ENCODE measurements at regions of chr3 and their contacts with region 1.

Region 1: GRCh38 chr3:193788189-193788991 is 195.4 kb downstream of the OPA1 start:
- DNase-seq: peak; percentile 48 to 77 (median 70)
- H3K4me3 ChIP-seq: no peak overlapping the region
- H3K27ac ChIP-seq: peak overlapping the region in 1 of 5 donors; percentile 30
- H3K4me1 ChIP-seq: no peaks in the 10 kb centered on the region
- H3K27me3 ChIP-seq: no peaks in the 10 kb centered on the region
- CTCF ChIP-seq: peak; percentile 57 to 86 (median 76)
- POLR2A ChIP-seq: no peak

Region 2: DNA sequence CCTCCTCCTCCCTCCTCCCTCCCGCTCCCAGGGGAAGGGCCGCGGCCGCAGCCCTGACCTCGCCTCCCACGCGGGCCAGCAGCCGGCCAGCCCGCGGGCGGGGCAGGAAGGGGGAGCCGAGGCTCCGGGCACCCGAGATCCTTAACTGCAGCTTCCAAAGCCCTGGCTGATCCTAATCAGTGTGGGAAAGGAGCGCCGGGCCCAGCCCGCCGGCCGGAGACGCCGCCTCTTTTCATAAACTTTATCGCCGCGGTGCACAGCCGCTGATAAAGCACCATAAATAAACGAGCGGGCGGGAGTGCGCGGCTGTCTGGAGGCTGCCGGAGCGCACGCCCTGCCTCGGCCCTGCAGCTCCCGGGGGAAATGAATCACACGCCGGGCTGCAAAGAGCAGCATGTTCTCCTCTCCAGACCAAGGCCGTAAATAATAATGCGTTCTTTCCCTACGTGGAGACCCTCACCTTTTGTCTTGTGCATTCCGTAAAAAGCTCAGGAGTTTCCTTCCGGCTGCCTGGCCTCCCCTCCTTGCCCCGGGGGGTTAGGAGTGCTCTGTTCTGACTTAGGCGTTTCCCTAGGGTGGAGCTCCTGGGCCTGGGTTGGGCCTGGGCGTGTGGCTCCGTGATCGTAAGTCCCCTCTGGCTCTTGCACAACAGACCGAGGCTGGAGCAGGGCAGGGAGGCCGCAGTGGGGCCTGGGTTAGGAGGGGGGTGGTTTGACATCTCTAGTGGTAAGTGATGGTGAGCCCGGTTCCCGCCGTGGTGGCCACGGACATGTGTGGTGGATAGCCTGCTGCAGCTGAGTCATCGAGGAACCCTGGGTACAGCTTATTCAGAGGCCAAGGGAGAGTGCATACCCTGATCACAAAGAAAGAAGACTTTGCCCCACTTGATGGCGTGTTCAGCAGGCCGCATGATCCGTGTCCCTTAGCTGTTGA is 215.0 kb after region 1 on chr3:
- intact Hi-C with region 1: loop called in 1 of 2 experiments (anchors 10 kb)
- DNase-seq: peak; percentile 85 to 95 (median 94)
- H3K4me3 ChIP-seq: peak overlapping the region in 2 of 4 donors; percentile 20 to 34
- H3K27ac ChIP-seq: peak overlapping the region; percentile 38 to 89 (median 79)
- H3K4me1 ChIP-seq: peaks cover 26 to 34% of the 10 kb centered on the region in 2 donors
- H3K27me3 ChIP-seq: no peaks in the 10 kb centered on the region
- CTCF ChIP-seq: peak in 1 of 6 experiments; percentile 7
- POLR2A ChIP-seq: peak in 1 of 2 donors; percentile 69

Region 3: GRCh38 chr3:194134757-194135528 is 346.6 kb after region 1 on chr3:
- intact Hi-C with region 1: loop called in 1 of 2 experiments (anchors 5 kb)
- DNase-seq: peak; percentile 86 to 94 (median 92)
- H3K4me3 ChIP-seq: peak overlapping the region in 3 of 4 donors; percentile 4 to 58 (median 36)
- H3K27ac ChIP-seq: peak overlapping the region; percentile 88 to 97 (median 91)
- H3K4me1 ChIP-seq: peaks cover 10 to 35% of the 10 kb centered on the region in 2 donors
- H3K27me3 ChIP-seq: no peaks in the 10 kb centered on the region
- CTCF ChIP-seq: peak in 1 of 6 experiments; percentile 11
- POLR2A ChIP-seq: peak; percentile 17 to 83

Measured in adrenal gland (tissue), 19 donors.